MCF 10A (cell line): ENCODE measurements at regions of chr4 and their contacts with region 1.

Region 1: DNA sequence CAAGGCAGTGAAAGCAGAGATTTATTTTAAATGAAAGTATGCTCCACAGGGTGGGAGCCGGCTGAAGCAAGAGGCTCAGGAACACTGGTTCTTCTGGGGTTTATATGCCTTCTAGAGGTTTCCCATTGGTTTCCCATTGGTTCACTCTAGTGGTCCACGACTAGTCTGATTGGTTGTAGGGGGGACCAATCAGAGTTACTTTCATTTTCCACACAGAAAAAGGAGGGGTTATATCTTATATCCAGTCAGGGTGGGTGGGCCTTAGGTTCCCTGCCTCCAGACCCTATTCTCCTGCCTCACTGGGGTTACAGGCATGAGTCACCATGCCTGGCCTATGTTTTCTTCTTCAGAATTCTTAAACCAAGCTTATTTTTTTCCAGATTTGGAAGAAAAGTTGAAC is 101.6 kb downstream of the KLHL8 start:
- DNase-seq: peak; percentile 28
- H3K4me3 Mint-ChIP-seq: no peak overlapping the region
- H3K27ac Mint-ChIP-seq: no peak overlapping the region
- H3K4me1 Mint-ChIP-seq: peaks cover 29% of the 10 kb centered on the region
- H3K27me3 Mint-ChIP-seq: no peaks in the 10 kb centered on the region
- CTCF ChIP-seq: no peak

Region 2: GRCh38 chr4:86359944-86360478 is 758.8 kb before region 1 on chr4 and contains the start of gene MAPK10:
- CTCF ChIA-PET with region 1: no interaction called
- POLR2A ChIA-PET with region 1: no interaction called
- intact Hi-C with region 1: no loop called
- DNase-seq: no peak
- H3K4me3 Mint-ChIP-seq: no peak within 1 kb of the TSS
- H3K27ac Mint-ChIP-seq: no peak within 1 kb of the TSS
- H3K4me1 Mint-ChIP-seq: peaks cover 6% of the 10 kb centered on the region
- H3K27me3 Mint-ChIP-seq: no peaks in the 10 kb centered on the region
- CTCF ChIP-seq: no peak
- total RNA-seq, gene MAPK10: 4.7 and 5.3 TPM in 2 replicates

Region 3: DNA sequence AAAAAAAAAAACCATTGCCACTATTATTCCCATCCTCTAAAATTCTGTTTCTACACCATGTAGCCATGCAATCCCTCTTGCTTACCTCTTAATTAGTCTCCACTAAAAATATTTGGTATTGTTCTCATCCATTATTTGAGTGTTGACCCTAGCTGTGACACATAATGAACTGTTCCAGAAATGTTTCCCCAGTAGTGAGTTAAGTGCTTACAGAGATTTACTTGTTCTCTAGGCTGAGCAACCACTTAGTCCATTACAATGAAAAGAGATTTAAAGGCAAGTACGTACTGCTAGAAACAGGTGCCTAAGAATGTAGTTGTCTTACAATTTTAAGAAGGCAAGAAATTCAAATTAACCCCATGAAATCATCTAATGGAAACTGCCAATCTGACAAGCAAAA is 637.4 kb before region 1 on chr4:
- CTCF ChIA-PET with region 1: no interaction called
- POLR2A ChIA-PET with region 1: no interaction called
- intact Hi-C with region 1: no loop called
- DNase-seq: no peak
- H3K4me3 Mint-ChIP-seq: no peak overlapping the region
- H3K27ac Mint-ChIP-seq: no peak overlapping the region
- H3K4me1 Mint-ChIP-seq: peaks cover 7% of the 10 kb centered on the region
- H3K27me3 Mint-ChIP-seq: no peaks in the 10 kb centered on the region
- CTCF ChIP-seq: no peak

Region 4: DNA sequence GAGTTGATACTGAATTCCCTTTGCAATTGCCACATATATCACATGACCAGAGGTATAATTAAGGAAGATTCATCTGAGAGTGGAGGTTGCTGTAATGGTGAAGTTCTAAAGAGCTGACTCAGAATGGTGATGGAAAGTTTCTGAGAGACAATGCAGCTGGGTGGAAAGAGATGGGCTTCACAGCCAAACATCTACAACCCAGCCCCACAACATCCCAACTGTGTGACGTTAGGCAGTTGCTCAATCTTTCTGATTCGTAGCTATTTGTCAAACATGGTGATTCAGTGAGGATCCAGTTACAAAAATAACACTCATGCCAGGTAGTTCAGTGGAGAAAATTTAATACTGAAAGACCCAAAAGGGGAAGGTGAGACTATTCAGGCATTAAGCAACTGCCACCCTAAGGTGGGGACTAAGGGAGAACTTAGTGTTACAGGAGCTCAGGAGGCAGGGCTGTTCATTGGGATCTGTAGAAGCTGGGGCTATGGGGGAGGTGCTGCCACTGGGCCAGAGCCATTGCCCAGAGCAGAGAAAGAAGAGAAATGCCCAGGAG is 190.9 kb before region 1 on chr4:
- CTCF ChIA-PET with region 1: interaction called, 35 read pairs
- POLR2A ChIA-PET with region 1: interaction called, 61 read pairs
- intact Hi-C with region 1: no loop called
- DNase-seq: peak; percentile 99
- H3K4me3 Mint-ChIP-seq: peak overlapping the region; percentile 32
- H3K27ac Mint-ChIP-seq: peak overlapping the region; percentile 88
- H3K4me1 Mint-ChIP-seq: peaks cover 45% of the 10 kb centered on the region
- H3K27me3 Mint-ChIP-seq: no peaks in the 10 kb centered on the region
- CTCF ChIP-seq: no peak

Region 5: DNA sequence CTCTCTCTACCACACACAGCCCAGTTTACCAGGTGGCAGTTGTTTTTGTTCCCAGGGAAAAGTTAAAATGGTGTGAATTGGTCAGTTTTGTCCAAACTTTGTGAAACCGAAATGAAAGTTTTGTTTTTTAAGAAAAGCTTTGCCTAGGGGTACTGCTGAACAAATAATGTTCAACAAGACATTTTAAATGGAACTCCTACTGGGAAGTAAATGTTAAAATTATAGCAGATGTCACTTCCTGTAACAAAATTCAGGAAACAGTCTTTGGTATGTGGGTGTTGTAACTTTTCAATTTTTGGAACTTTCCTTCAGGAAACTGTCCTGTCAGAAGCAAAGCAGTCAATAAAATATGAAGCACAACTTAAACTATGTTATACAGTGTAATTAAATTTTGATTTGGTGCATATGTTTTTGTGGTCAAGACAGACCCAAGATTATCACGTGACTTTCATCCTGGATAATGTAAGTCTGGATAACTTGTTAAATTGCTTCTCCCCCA is 104.5 kb before region 1 on chr4:
- CTCF ChIA-PET with region 1: interaction called, 4 read pairs
- POLR2A ChIA-PET with region 1: interaction called, 63 read pairs
- intact Hi-C with region 1: loop called (anchors 5 kb)
- DNase-seq: no peak
- H3K4me3 Mint-ChIP-seq: peak overlapping the region; percentile 25
- H3K27ac Mint-ChIP-seq: peak overlapping the region; percentile 82
- H3K4me1 Mint-ChIP-seq: peaks cover 44% of the 10 kb centered on the region
- H3K27me3 Mint-ChIP-seq: no peaks in the 10 kb centered on the region
- CTCF ChIP-seq: no peak

Region 6: DNA sequence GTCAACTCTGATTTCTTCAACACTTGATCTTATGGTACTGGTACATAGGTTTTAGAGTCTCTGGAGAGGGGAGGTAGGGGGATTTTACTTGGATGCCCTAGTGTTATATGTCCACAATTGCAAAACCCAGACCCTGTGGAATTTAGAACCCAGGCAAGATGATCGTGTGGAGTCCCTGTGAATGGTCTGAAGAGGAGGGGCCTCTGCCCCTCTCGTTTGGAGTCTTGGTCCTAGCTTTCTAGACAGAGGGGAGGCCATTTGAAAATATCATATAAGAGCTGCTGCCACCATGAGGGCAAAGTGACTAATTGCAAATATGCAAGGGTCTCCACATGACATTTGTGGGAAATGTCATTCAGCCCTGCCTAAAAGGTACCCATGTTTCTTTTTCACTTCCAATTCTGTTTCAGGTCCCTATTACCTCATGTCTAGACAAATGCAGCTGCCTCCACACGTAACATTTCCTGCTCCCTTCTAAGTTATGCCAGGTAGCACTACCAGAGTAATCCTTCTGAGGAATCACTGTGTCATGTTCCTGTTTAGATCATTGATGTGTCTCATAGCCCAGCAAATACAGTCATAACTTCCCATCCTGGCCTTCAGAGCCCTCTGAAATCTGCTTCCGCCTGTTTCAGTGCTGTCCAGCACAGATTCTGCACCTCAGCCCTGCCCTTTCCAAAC is 25.2 kb before region 1 on chr4:
- CTCF ChIA-PET with region 1: interaction called, 3 read pairs
- POLR2A ChIA-PET with region 1: interaction called, 29 read pairs
- intact Hi-C with region 1: no loop called
- DNase-seq: peak; percentile 59
- H3K4me3 Mint-ChIP-seq: peak overlapping the region; percentile 23
- H3K27ac Mint-ChIP-seq: peak overlapping the region; percentile 87
- H3K4me1 Mint-ChIP-seq: peaks cover 25% of the 10 kb centered on the region
- H3K27me3 Mint-ChIP-seq: no peaks in the 10 kb centered on the region
- CTCF ChIP-seq: peak; percentile 57

Region 7: DNA sequence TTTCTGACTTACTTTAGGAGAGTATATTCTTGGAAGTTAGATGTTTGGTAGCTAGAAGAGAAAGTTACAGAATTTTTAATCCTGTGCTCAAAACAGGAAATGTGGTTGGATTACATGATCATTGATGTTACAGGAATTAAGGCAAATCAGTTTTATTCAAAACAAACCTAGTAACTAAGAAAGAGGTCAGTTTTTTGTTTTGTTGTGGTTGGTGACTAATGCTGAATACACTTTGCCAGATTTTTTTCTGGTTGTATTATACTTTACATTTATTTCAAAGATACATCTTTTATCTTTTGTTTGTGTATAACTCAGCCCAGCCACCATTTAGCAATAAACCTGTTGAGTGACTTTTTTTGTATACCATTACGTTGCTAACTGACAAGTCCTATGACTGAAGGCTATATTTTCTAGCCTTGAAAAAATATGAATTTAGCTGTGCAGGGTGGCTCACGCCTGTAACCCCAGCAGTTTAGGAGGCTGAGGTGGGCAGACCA is 15.1 kb before region 1 on chr4:
- CTCF ChIA-PET with region 1: no interaction called
- POLR2A ChIA-PET with region 1: interaction called, 43 read pairs
- intact Hi-C with region 1: no loop called
- DNase-seq: peak; percentile 64
- H3K4me3 Mint-ChIP-seq: no peak overlapping the region
- H3K27ac Mint-ChIP-seq: peak overlapping the region; percentile 82
- H3K4me1 Mint-ChIP-seq: peaks cover 33% of the 10 kb centered on the region
- H3K27me3 Mint-ChIP-seq: no peaks in the 10 kb centered on the region
- CTCF ChIP-seq: no peak